Sigmoid colon (tissue), 7 donors: ENCODE measurements at regions of chr6 and their contacts with region 1.

Region 1: DNA sequence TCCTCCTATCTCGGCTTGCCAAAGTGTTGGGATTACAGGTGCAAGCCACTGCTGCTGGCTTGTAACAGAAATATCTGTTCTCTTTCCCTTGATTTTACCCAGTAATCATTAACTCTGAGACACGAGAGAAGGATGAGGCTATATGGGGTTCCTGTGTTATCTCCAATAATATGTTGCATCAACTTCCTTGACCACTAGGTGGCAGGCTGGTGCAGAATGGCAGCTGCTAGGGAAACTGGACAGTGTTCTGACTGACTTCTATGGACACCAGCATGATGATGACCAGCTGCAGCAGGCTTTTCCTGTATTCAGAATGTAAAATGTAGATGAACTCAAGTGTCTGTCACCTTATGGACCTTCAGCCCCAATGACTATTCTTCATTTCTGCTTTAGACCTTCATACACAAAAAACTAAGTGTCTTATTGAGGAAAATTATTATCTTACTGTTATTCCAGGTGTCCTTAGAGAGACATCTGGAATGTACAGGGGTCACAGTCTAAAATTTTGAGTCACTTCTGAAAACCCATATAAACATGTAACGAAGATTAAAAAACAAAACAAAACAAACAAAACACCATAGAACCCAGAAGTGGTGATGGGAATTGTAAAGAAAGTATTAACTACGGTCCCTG is 20.4 kb upstream of the CD109 start:
- DNase-seq: peak; percentile 84
- H3K4me3 ChIP-seq: no peak overlapping the region
- H3K27ac ChIP-seq: no peak overlapping the region
- H3K4me1 ChIP-seq: peaks cover 0 to 7% (median 3%) of the 10 kb centered on the region in 4 donors
- H3K27me3 ChIP-seq: peaks cover 0 to 8% (median 0%) of the 10 kb centered on the region in 3 donors
- CTCF ChIP-seq: peak; percentile 81 to 84 (median 82)
- EP300 ChIP-seq: no peak
- POLR2A ChIP-seq: no peak

Region 2: DNA sequence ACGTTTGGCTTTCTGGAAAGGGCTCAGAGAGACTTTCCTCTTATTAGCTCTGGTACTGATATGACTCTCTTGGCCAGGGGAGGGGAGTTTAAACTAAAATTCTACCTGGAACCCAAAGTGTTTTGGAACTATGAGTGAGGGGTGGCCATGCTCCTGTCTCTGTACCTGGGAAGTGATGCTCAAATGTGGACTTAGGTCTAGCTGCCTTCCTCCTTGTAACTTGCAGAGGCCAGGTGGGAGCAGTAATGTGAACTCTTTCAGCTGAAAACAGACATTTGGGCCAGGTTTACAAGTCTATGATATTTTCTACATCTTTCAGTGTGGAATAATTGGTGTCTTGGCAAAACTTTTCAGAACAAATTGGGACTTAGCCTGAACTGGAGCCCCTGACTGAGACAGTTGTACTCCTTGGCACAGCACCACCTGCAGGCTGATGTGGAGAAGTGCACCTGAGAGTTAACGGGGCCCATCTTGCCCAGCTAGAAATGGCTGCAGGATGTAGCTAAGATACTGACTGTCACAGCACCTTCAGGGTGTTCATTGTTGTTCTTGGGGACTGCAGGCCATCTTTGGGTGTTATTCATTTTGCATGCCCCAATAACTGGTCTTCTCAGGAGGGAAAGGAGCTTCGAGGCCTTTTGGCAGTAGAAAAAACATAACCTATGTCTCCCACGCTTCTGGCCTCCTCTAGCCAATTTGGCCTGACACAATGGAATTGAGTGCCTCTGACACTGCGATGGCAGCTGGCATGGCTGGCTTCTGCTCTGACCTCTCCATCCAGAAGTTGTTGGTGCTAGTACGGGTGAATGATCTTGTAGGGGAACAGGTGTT is 57.5 kb after region 1 on chr6:
- intact Hi-C with region 1: loop called (anchors 1 kb)
- DNase-seq: peak; percentile 83
- H3K4me3 ChIP-seq: no peak overlapping the region
- H3K27ac ChIP-seq: peak overlapping the region in 2 of 4 donors; percentile 14 to 16
- H3K4me1 ChIP-seq: peaks cover 0 to 7% (median 6%) of the 10 kb centered on the region in 4 donors
- H3K27me3 ChIP-seq: no peaks in the 10 kb centered on the region
- CTCF ChIP-seq: peak; percentile 71 to 95 (median 84)
- EP300 ChIP-seq: no peak
- POLR2A ChIP-seq: no peak

Region 3: DNA sequence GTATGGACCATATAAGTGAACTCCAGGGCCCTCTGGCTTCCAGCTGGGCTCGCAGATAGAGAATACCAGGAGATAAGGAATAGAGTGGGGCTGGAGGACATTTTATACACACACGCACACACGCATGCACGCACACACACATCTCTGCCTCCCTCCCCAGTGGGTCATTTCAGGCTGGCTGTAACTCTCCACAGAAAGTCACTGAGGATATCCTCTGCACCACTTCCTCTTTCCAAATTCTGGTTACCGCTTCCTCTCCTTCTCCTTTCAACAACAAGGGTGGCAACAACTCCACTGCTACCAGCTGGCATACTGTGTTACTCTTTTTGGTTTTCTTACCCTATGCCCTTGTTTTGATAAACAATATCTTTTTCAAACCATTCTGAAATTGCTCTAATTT is 1250.1 kb after region 1 on chr6:
- intact Hi-C with region 1: no loop called
- DNase-seq: no peak
- H3K4me3 ChIP-seq: no peak overlapping the region
- H3K27ac ChIP-seq: no peak overlapping the region
- H3K4me1 ChIP-seq: no peaks in the 10 kb centered on the region
- H3K27me3 ChIP-seq: no peaks in the 10 kb centered on the region
- CTCF ChIP-seq: no peak
- EP300 ChIP-seq: no peak
- POLR2A ChIP-seq: no peak